ENCODE measurements at regions of chr11 and their contacts with region 1.

Region 1: GRCh38 chr11:727859-728748 is 19.2 kb upstream of the TALDO1 start:
- DNase-seq: peak; percentile 86 to 95
- H3K4me3 ChIP-seq: no peak overlapping the region
- H3K27ac ChIP-seq: peak overlapping the region; percentile 57 to 66
- H3K4me1 ChIP-seq: peaks cover 0 to 44% (median 32%) of the 10 kb centered on the region in 4 donors
- H3K27me3 ChIP-seq: peaks cover 0 to 57% of the 10 kb centered on the region in 2 donors
- CTCF ChIP-seq: peak; percentile 94 to 98

Region 2: GRCh38 chr11:554824-555472 is 173.2 kb before region 1 on chr11:
- intact Hi-C with region 1: loop called (anchors 2 kb)
- DNase-seq: no peak
- H3K4me3 ChIP-seq: peak overlapping the region in 1 of 2 donors; percentile 35
- H3K27ac ChIP-seq: no peak overlapping the region
- H3K4me1 ChIP-seq: peaks cover 0 to 26% (median 18%) of the 10 kb centered on the region in 4 donors
- H3K27me3 ChIP-seq: peaks cover 13 to 98% of the 10 kb centered on the region in 2 donors
- CTCF ChIP-seq: peak; percentile 47 to 54

Region 3: DNA sequence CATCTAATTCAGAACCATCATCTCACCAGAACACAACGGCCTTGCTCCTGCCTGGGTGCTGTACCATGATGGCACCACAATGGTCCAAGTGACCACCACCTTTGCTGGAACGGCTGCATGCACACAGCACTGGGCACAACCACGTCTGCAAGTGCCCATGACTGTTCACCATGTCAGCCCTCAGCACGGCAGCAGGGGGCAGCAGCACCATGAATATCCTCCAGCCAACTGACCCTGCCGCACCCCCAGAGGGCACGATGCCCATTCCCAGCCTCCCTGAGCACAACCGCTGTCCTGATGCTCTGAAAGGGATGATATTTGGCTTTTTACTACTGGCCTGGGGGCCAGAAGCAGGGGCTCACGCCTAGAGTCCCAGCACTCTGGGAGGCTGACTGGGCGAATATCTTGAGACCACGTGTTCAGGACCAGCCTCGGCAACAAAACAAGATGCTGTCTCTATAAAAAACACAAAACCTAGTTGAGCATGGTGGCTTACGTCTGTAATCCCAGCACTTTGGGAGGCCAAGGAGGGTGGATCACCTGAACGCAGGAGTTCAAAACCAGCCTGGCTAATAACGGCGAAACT is 65.3 kb before region 1 on chr11:
- intact Hi-C with region 1: loop called (anchors 5 kb)
- DNase-seq: peak in 1 of 2 donors; percentile 37
- H3K4me3 ChIP-seq: no peak overlapping the region
- H3K27ac ChIP-seq: no peak overlapping the region
- H3K4me1 ChIP-seq: peaks cover 0 to 9% (median 0%) of the 10 kb centered on the region in 4 donors
- H3K27me3 ChIP-seq: no peaks in the 10 kb centered on the region
- CTCF ChIP-seq: peak; percentile 50 to 70